Posterior vena cava (tissue), 2 donors: ENCODE measurements at regions of chr12 and their contacts with region 1.

Region 1: DNA sequence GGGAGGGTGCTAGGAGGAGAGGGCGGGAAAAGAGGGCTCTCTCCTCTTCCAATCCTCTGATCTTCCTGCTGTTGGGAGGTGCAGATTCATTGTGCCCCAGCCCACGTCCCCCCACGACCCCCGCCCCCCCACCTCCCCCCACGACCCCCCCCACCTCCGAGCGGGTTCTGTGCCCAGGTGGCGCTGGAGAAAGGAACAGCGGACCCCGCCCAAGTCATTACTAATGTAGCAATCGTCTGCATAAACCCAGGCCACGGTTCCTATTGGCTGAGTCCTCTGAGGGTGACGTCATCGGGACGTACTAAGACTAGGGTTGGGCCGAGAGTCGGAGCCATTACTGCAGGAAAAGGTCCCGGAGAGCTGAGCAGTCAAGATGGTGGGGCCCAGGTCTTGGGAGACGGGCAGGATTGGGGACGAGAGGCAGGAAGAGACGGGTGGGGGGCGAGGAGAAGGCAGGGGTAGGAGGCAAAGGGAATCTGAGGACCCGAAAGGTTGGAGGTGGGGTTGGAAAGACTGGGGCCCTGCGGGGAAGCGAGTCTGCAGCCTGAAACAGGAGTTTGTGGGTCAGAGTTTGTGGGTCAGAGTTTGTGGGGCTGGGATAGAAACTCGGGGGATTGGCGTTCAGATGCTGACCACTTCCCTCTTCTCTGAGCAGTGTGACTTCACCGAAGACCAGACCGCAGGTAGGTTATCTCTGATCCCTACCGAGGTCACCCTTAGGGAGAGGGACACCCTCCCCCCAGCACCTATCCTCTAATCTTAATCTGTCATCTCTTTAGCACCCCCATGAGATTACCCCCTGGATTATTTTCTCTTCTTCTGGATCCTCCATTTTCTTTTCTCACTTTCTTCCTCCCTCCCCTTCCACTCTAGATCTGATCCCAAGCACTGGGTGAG is at the start of gene MYL6:
- DNase-seq: peak; percentile 98
- total RNA-seq, gene MYL6: 3,219 to 3,986 TPM

Region 2: GRCh38 chr12:56124133-56124532 is 34.1 kb before region 1 on chr12:
- intact Hi-C with region 1: loop called in 1 of 2 experiments (anchors 2 kb)
- DNase-seq: no peak

Region 3: GRCh38 chr12:56178347-56178746 is 20.1 kb after region 1 on chr12:
- intact Hi-C with region 1: loop called in 1 of 2 experiments (anchors 1 kb)
- DNase-seq: peak; percentile 13